Natural killer cell (primary cell): ENCODE measurements at regions of chr11 and their contacts with region 1.

Region 1: DNA sequence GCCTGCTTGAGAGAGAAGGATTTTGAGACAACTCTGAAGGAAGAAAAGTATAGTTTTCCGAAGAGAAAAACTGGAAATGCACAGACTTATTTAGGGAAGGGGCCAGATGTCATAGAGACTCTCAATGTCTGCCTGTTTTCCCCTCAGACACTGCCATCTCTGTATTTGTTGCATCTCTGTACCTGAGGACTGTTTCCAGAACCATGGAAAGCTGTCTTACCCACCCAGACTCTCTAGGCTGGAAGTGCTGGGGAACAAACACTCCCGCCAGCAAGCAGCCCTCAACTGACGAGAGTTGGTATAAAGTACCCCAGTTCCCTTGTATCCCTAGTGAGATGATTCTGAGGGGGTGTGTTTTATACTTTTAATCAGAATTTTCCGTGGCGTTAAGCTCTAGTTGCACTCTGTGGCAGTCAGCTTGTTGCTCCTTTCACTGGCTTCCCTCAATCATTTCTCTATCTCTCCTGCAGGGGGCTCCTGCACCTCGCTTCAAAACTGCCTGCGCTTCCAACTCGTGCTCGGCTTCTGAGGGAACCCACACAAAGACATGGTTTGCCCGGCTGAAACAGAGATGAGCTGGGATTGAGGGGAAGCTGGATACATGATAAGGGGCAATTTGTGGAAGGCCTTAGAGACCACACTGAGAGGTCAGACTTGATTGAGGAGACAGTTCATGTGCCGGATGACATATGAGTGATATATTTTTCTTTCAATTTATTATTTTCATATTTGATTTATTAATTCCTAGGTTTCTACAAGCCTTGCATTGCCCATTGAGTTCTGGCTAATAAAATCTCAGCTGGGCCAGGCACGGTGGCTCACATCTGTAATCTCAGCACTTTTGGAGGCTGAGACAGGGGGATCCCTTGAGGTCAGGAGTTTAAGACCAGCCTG is 36.9 kb upstream of the CLPB start:
- DNase-seq: peak; percentile 44 to 81
- ATAC-seq: peak; percentile 84 to 97 (median 92)
- H3K4me3 ChIP-seq: no peak overlapping the region
- H3K4me3 Mint-ChIP-seq: no peak overlapping the region
- H3K27ac ChIP-seq: no peak overlapping the region
- H3K27ac Mint-ChIP-seq: no peak overlapping the region
- H3K4me1 ChIP-seq: peaks cover 8% of the 10 kb centered on the region
- H3K4me1 Mint-ChIP-seq: peaks cover 6% of the 10 kb centered on the region in 2 donors
- H3K27me3 ChIP-seq: peaks cover 3% of the 10 kb centered on the region
- H3K27me3 Mint-ChIP-seq: peaks cover 19 to 23% of the 10 kb centered on the region in 2 donors
- CTCF ChIP-seq: peak; percentile 84

Region 2: DNA sequence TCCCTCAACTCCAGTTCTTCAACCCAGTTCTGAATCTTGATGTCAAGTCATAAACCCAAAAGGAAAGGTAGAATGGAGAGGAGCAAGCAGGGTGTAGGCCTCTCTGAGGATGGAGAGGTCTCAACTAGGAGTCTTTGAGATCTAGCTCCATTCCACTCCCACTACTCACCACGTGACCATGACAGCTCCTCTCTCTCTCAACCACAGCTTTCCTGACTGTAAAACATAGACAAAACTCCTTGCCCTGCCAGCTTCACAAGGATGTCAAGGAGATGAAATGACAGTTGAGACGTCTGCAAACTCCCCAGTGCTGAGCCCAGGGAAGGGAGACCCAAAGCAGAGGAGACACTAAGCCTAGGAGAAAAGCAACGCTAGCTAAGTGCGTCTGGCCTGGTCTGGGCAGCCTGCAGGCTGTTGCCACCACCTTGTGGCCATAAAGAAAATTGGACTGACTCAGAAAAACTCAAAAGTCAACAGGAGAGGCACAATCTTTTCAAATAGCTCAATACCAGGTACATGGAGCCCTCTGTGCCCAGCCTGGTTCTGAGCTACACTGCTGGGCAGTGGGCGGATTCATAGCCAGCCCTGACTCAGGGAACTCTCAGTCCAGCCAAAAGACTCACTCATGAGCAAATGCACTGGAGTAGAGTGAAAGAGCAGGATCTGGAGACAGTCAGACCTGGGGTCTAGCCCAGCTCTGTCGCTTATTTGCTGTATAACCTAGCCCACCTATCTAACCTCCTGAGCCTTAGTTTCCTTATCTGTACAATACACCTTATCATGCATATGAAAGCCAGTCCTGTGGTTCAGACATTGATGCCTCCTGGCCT is 40.3 kb before region 1 on chr11:
- intact Hi-C with region 1: no loop called
- DNase-seq: peak in 1 of 2 donors; percentile 70
- ATAC-seq: no peak
- H3K4me3 ChIP-seq: no peak overlapping the region
- H3K4me3 Mint-ChIP-seq: peak overlapping the region; percentile 35
- H3K27ac ChIP-seq: no peak overlapping the region
- H3K27ac Mint-ChIP-seq: peak overlapping the region; percentile 43 to 78
- H3K4me1 ChIP-seq: peaks cover 24% of the 10 kb centered on the region
- H3K4me1 Mint-ChIP-seq: peaks cover 35 to 50% of the 10 kb centered on the region in 2 donors
- H3K27me3 ChIP-seq: no peaks in the 10 kb centered on the region
- H3K27me3 Mint-ChIP-seq: no peaks in the 10 kb centered on the region
- CTCF ChIP-seq: peak; percentile 53

Region 3: DNA sequence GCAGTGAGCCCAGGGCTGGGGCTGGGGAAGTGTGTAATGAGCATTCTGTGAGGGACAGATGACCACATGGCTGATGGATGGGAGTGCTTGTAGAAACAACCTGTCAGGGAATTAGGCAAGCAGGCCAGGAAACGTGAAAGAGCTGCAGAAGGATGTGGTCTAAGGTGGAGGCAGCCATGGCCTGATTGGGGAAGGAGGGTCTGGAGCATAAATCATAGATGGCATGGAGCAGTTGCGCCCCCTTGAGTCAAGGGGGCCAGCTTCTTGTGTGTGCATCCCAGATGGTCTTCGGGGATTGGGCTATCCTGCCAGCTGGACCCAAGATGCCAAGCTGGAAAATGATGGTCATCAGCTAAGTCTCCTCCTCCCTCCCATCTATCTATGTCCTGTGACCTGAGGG is 82.5 kb after region 1 on chr11:
- intact Hi-C with region 1: loop called (anchors 1 kb)
- DNase-seq: peak in 1 of 2 donors; percentile 67
- ATAC-seq: peak in 2 of 3 donors; percentile 64 to 84
- H3K4me3 ChIP-seq: no peak overlapping the region
- H3K4me3 Mint-ChIP-seq: no peak overlapping the region
- H3K27ac ChIP-seq: no peak overlapping the region
- H3K27ac Mint-ChIP-seq: no peak overlapping the region
- H3K4me1 ChIP-seq: peaks cover 10% of the 10 kb centered on the region
- H3K4me1 Mint-ChIP-seq: peaks cover 15 to 21% of the 10 kb centered on the region in 2 donors
- H3K27me3 ChIP-seq: no peaks in the 10 kb centered on the region
- H3K27me3 Mint-ChIP-seq: peaks cover 4 to 13% of the 10 kb centered on the region in 2 donors
- CTCF ChIP-seq: peak; percentile 28

Region 4: DNA sequence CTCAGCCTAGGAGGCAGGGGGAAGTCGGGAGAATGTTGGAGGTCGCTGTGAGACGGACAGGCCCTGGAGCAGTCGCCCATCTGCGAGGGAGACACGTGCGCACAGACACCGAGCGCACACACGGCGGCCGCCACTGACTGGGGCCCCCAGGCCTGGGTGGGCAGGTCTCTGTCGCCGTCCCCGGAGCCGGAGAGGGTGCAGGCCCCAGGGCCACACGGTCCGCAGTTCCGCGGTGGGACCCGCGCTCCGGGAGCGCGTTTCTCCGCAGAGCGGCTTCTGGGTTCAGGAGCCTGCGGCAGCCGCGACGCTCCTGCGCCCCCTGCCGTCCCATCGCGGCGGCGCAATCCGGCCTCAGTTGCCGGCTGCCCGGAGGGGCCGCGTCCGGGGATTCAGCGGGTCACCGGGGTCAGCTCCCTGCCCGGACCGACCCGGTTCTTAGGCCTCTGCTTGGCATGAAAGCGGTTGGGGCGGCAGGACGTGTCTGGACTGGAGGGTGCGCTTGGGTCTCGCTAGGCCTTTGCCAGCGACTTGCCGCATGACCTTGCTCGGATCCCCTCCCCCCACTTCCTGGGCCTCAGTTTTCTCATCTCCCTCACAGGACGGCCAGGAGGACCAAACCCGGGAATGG is 171.7 kb after region 1 on chr11:
- intact Hi-C with region 1: loop called (anchors 1 kb)
- DNase-seq: peak; percentile 73 to 83
- ATAC-seq: peak; percentile 79 to 85 (median 83)
- H3K4me3 ChIP-seq: peak overlapping the region; percentile 51
- H3K4me3 Mint-ChIP-seq: peak overlapping the region; percentile 89
- H3K27ac ChIP-seq: no peak overlapping the region
- H3K27ac Mint-ChIP-seq: no peak overlapping the region
- H3K4me1 ChIP-seq: peaks cover 19% of the 10 kb centered on the region
- H3K4me1 Mint-ChIP-seq: peaks cover 0 to 7% of the 10 kb centered on the region in 2 donors
- H3K27me3 ChIP-seq: peaks cover 32% of the 10 kb centered on the region
- H3K27me3 Mint-ChIP-seq: peaks cover 0 to 8% of the 10 kb centered on the region in 2 donors
- CTCF ChIP-seq: peak; percentile 98

Region 5: DNA sequence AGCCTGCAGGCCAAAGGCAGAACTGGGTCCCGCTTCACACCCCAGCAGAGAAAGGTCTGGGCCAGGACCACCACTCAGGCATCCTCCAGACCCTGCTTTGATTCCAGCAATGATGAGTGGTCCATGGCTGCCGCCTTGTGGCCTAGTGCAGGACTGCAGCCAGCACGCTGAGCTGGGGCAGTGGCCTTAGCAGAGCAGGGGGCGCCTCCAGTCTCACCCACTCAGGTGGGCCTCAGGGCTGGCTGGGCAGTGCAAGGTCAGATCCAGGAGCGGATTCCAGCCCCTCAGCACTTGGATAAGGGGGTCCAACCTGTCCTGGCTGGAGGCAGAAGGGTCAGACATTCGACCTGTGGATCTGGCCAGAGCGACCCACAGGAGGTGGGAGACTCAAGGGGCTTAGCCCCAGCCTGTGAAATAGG is 212.5 kb after region 1 on chr11:
- intact Hi-C with region 1: loop called (anchors 1 kb)
- DNase-seq: peak; percentile 70 to 78
- ATAC-seq: peak; percentile 74 to 78 (median 76)
- H3K4me3 ChIP-seq: no peak overlapping the region
- H3K4me3 Mint-ChIP-seq: no peak overlapping the region
- H3K27ac ChIP-seq: no peak overlapping the region
- H3K27ac Mint-ChIP-seq: peak overlapping the region in 1 of 2 donors; percentile 61
- H3K4me1 ChIP-seq: peaks cover 5% of the 10 kb centered on the region
- H3K4me1 Mint-ChIP-seq: peaks cover 24 to 44% of the 10 kb centered on the region in 2 donors
- H3K27me3 ChIP-seq: no peaks in the 10 kb centered on the region
- H3K27me3 Mint-ChIP-seq: no peaks in the 10 kb centered on the region
- CTCF ChIP-seq: peak; percentile 91